Activated T-helper 1 cell treated with anti-CD3 and anti-CD28 coated beads, Interleukin-12 subunit alpha, Interleukin-12 subunit beta, Interleukin-2, Interleukin-4 antibody, amounts not matched to agents 30 ng/mL and 10 ng/mL and 1 ng/mL, durations not matched to agents 14 hours and 24 hours and 36 hours (primary cell): ENCODE measurements at regions of chr9 and their contacts with region 1.

Region 1: DNA sequence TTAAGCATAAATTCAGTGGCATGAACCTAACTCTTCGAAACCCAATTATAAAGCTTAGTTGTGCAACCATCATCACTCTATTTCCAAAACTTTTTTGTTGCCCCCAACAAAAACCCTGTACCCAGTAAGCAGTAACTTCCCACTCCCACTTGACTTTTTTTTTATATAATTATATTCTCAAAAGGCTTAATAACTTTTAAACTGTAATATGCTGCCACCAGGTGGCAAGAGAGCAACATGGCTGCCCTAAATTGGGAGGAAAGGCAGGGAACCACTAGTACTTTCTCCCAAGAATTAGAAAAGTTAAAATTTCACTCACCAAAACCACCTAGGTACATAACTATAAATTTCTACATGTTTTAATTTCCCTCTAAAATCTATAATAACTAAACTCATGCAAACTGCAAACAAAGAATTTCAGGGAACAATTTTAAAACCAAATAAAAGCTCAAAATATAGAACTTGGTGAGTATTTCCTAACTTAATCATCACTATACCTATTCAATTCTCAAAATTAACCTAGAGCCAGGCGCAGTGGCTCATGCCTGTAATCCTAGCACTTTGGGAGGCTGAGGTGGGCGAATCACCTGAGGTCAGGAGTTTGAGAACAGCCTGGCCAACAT is 50.2 kb upstream of the RNF38 start:
- DNase-seq: no peak
- H3K4me3 Mint-ChIP-seq: no peak overlapping the region
- H3K27ac Mint-ChIP-seq: no peak overlapping the region
- H3K4me1 Mint-ChIP-seq: no peaks in the 10 kb centered on the region
- H3K27me3 Mint-ChIP-seq: no peaks in the 10 kb centered on the region

Region 2: DNA sequence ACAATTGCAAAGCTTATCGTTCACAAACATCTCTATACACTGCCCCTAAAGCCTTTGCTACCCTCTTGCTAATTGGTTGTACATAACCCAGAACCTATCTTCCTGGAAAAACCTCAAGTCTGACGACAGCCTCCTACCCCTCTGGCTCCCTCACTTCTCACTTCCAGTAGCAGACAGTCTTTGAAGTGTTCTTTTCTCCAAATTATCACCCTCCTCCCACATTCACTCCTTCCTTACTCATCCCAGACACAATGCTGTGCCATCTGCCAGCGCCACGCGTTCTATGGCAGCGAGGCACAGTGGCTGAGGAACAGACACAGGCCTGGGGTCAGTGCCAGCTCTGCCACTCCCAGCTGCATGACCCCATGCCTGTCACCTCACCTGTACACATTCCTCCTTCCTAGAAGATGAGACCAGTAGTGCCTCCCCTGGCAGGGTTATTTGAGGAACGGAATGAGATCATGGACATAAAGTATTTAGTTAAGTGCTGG is 231.8 kb before region 1 on chr9:
- intact Hi-C with region 1: no loop called
- DNase-seq: peak; percentile 17
- H3K4me3 Mint-ChIP-seq: peak overlapping the region; percentile 71
- H3K27ac Mint-ChIP-seq: peak overlapping the region; percentile 90
- H3K4me1 Mint-ChIP-seq: peaks cover 37% of the 10 kb centered on the region
- H3K27me3 Mint-ChIP-seq: no peaks in the 10 kb centered on the region

Region 3: DNA sequence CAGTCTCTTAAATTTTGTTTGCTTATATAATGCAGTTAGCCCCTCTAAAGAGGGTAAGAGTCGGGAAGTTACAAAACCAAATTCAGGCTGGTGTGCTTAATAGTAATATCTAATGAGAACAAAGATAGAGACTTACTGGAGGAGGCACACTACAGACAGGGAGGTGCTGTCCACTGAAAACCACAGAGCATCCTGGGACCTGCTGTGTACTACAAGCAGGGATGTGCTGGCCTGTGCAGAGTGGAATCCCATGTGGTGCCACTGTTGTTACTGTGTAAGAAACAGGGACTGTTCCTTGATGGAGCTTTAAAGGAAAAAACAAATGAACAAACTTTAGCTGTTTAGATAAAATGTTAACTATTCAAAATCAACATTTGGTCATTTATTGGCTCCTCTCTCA is 92.6 kb before region 1 on chr9:
- intact Hi-C with region 1: no loop called
- DNase-seq: no peak
- H3K4me3 Mint-ChIP-seq: no peak overlapping the region
- H3K27ac Mint-ChIP-seq: no peak overlapping the region
- H3K4me1 Mint-ChIP-seq: no peaks in the 10 kb centered on the region
- H3K27me3 Mint-ChIP-seq: no peaks in the 10 kb centered on the region

Region 4: DNA sequence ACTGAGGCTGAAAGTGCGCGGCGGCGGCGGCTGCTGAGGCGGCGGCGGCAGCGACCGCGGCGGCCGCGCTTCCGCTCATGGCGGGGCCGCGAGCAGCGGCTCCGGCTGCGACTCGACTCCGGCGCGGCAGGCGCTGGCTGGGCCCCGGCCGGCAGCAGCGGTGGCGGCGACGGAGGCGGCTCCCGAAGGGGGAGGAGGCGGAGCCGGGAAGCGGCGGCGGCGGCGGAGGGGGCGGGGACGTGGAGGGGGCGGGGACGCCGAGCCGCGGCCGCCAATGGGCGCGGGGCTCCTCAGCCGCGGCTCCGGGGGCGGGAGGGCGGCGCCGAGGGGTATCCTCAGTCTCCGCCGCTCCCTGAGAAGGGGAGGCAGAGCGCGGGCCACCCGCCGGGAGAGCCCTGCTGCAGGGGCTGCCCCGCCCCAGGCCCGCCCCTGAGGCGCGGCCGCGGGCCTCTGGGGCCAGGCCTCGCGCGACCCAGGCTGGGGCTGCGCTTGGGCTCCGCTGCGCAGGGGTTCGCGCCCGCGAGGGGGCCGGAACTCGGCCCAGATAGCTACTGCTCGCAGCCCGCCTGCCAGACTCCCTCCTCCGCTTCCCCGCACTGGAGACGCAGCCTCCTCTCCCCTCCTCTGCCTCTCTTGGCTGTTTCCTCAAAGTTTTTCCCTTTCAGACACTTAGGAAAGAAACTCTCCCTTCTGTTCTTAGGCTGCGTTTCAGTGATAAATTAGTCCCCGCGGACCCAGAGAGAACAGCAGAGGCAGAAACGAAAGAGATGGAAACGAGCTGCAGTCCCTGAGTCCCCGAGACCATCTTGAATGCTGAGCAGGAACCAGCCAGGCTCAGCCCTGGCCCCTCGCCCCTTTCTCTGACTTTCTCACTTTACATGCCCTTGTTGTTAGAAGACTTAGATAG is 37.5 kb after region 1 on chr9:
- intact Hi-C with region 1: no loop called
- DNase-seq: peak; percentile 91
- H3K4me3 Mint-ChIP-seq: peak overlapping the region; percentile 87
- H3K27ac Mint-ChIP-seq: peak overlapping the region; percentile 87
- H3K4me1 Mint-ChIP-seq: peaks cover 53% of the 10 kb centered on the region
- H3K27me3 Mint-ChIP-seq: no peaks in the 10 kb centered on the region

Region 5: DNA sequence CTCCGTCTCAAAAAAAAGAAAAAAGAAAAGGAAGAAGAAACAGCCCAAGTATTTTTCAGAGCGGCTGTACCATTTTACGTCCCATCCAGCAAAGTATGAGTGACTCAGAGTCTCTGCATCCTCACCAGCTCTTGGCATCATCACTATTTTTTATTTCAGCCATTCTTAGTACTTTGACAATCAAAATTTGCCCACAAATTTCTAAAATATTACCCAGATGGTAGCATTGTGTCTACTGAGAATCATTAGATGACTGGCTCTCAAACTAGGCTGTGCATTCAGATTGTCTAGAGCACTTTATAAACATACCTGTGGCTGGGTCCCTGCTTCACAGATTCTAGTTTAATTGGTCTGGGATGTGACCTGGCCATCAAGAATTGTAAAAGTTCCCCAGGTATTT is 100.9 kb after region 1 on chr9:
- intact Hi-C with region 1: loop called (anchors 1 kb)
- DNase-seq: no peak
- H3K4me3 Mint-ChIP-seq: no peak overlapping the region
- H3K27ac Mint-ChIP-seq: no peak overlapping the region
- H3K4me1 Mint-ChIP-seq: no peaks in the 10 kb centered on the region
- H3K27me3 Mint-ChIP-seq: peaks cover 25% of the 10 kb centered on the region